Activated CD4-positive, alpha-beta memory T cell treated with anti-CD3 and anti-CD28 coated beads for 36 hours (primary cell): ENCODE measurements at regions of chr1 and their contacts with region 1.

Region 1: DNA sequence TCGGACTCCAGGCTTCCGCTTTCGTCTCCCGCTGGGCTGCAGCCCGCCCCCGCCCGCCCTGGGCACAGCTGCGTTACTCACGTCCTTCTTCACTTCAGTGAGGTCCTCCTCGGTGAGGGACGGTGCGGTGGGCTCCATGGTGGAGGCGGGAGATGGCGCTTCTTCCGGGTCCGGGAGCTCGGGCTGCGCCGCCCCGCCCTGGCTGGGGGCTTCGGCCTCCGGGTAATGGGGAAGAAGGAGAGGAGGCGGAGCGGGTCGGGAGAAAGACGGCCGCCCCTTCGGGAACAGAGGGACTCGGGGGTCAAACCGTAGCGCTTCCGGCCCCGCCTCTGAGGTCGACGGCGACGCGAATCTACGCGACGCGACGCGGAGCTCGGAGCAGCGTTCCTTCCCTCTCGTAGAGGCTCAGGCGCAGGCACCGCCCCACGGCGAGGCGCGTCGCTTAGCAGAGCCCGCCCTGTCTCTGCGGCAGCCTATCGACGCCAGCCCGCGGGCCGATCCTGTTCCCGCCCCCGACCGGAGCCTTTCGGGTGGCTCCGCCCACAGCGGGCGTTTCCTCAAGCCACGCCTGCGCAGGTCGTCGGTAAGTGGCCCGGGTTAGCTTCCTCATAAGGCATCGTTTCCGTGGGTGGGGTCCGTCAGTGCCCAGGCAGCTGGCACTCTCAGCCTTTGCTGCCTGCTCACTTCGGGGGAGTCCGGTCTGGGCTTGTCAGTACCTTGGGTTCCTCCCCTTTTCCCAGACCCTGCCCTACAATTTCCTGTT is at the start of gene BCL10:
- DNase-seq: peak; percentile 98
- H3K4me3 Mint-ChIP-seq: peak within 1 kb of the TSS; percentile 82
- H3K27ac Mint-ChIP-seq: peak within 1 kb of the TSS; percentile 92
- H3K4me1 Mint-ChIP-seq: peaks cover 50% of the 10 kb centered on the region
- H3K27me3 Mint-ChIP-seq: peaks cover 5% of the 10 kb centered on the region
- total RNA-seq, gene BCL10: 31.1 to 31.5 TPM

Region 2: DNA sequence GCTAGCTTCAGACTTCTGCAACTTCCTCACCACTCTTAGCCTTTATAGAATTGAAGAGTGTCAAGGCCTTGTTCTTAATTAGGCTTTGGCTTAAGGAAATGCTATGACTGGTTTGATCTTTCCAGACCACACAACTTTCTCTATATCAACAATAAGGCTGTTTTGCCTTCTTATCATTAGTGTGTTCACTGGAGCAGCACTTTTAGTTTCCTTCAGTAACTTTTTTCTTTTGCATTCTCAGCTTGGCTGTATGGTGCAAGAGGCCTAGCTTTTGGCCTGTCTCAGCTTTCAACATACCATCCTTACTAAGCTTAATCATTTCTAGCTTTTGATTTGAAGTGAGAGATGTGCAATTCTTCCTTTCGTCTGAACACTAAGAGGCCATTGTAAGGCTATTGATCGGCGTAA is 1123.7 kb before region 1 on chr1:
- CTCF ChIA-PET with region 1: no interaction called
- POLR2A ChIA-PET with region 1: no interaction called
- intact Hi-C with region 1: loop called (anchors 5 kb)
- DNase-seq: peak; percentile 43
- H3K4me3 Mint-ChIP-seq: peak overlapping the region; percentile 39
- H3K27ac Mint-ChIP-seq: peak overlapping the region; percentile 86
- H3K4me1 Mint-ChIP-seq: peaks cover 79% of the 10 kb centered on the region
- H3K27me3 Mint-ChIP-seq: no peaks in the 10 kb centered on the region

Region 3: GRCh38 chr1:84690397-84691121 is 585.8 kb before region 1 on chr1 and contains the start of gene SSX2IP:
- CTCF ChIA-PET with region 1: no interaction called
- POLR2A ChIA-PET with region 1: no interaction called
- intact Hi-C with region 1: loop called (anchors 1 kb)
- DNase-seq: peak; percentile 99
- H3K4me3 Mint-ChIP-seq: peak within 1 kb of the TSS; percentile 94
- H3K27ac Mint-ChIP-seq: peak within 1 kb of the TSS; percentile 80
- H3K4me1 Mint-ChIP-seq: peaks cover 53% of the 10 kb centered on the region
- H3K27me3 Mint-ChIP-seq: peaks cover 2% of the 10 kb centered on the region
- total RNA-seq, gene SSX2IP: 10.9 to 11.6 TPM

Region 4: GRCh38 chr1:84973498-84974334 is 302.7 kb before region 1 on chr1:
- CTCF ChIA-PET with region 1: no interaction called
- POLR2A ChIA-PET with region 1: no interaction called
- intact Hi-C with region 1: loop called (anchors 1 kb)
- DNase-seq: peak; percentile 37
- H3K4me3 Mint-ChIP-seq: no peak overlapping the region
- H3K27ac Mint-ChIP-seq: peak overlapping the region; percentile 55
- H3K4me1 Mint-ChIP-seq: peaks cover 76% of the 10 kb centered on the region
- H3K27me3 Mint-ChIP-seq: no peaks in the 10 kb centered on the region

Region 5: GRCh38 chr1:85259118-85259911 is 17.1 kb before region 1 on chr1 and contains the start of gene C1orf52:
- CTCF ChIA-PET with region 1: interaction called, 122 read pairs
- POLR2A ChIA-PET with region 1: interaction called, 16 read pairs
- intact Hi-C with region 1: loop called (anchors 1 kb)
- DNase-seq: peak; percentile 97
- H3K4me3 Mint-ChIP-seq: peak within 1 kb of the TSS; percentile 97
- H3K27ac Mint-ChIP-seq: peak within 1 kb of the TSS; percentile 92
- H3K4me1 Mint-ChIP-seq: peaks cover 33% of the 10 kb centered on the region
- H3K27me3 Mint-ChIP-seq: no peaks in the 10 kb centered on the region
- total RNA-seq, gene C1orf52: 19.4 to 21.8 TPM

Region 6: GRCh38 chr1:85692730-85693314 is 416.4 kb after region 1 on chr1:
- CTCF ChIA-PET with region 1: no interaction called
- POLR2A ChIA-PET with region 1: no interaction called
- intact Hi-C with region 1: no loop called
- DNase-seq: no peak
- H3K4me3 Mint-ChIP-seq: no peak overlapping the region
- H3K27ac Mint-ChIP-seq: no peak overlapping the region
- H3K4me1 Mint-ChIP-seq: peaks cover 4% of the 10 kb centered on the region
- H3K27me3 Mint-ChIP-seq: no peaks in the 10 kb centered on the region

Region 7: GRCh38 chr1:85707990-85708828 is 431.8 kb after region 1 on chr1 and contains the start of gene ZNHIT6:
- CTCF ChIA-PET with region 1: interaction called, 4 read pairs
- POLR2A ChIA-PET with region 1: interaction called, 7 read pairs
- intact Hi-C with region 1: loop called (anchors 1 kb)
- DNase-seq: peak; percentile 93
- H3K4me3 Mint-ChIP-seq: no peak within 1 kb of the TSS
- H3K27ac Mint-ChIP-seq: no peak within 1 kb of the TSS
- H3K4me1 Mint-ChIP-seq: peaks cover 23% of the 10 kb centered on the region
- H3K27me3 Mint-ChIP-seq: no peaks in the 10 kb centered on the region
- total RNA-seq, gene ZNHIT6: 18.7 TPM